ENCODE measurements at regions of chr19 and their contacts with region 1.

Region 1: GRCh38 chr19:35154525-35155406 is at the start of gene FXYD5:
- DNase-seq: peak; percentile 93
- ATAC-seq: peak; percentile 81
- H3K4me3 Mint-ChIP-seq: peak within 1 kb of the TSS; percentile 96
- H3K27ac Mint-ChIP-seq: peak within 1 kb of the TSS; percentile 99
- H3K4me1 Mint-ChIP-seq: peaks cover 52% of the 10 kb centered on the region
- H3K27me3 Mint-ChIP-seq: no peaks in the 10 kb centered on the region
- total RNA-seq, gene FXYD5: 261 to 358 TPM

Region 2: DNA sequence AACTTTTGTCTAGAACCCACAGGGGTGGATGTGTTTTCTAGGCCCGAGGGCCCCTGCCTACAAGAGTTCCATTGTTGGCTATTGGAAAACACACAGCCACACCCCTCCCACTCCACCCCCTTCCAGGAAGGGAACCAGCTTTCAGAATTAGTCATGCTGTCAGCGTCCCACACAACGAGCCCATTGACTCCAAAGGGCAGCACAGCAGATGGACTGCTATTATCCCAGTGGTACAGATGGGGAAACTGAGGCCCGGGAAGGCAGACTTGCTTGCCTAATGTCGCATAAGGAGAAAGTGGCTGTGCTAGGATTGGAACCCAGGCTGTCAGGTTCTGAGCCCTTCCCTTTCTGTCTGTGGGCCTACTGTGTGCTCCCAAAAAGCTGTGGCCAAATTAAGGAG is 47.2 kb before region 1 on chr19:
- CTCF ChIA-PET with region 1: no interaction called
- POLR2A ChIA-PET with region 1: no interaction called
- intact Hi-C with region 1: no loop called
- DNase-seq: peak; percentile 34
- ATAC-seq: peak; percentile 30
- H3K4me3 Mint-ChIP-seq: no peak overlapping the region
- H3K27ac Mint-ChIP-seq: no peak overlapping the region
- H3K4me1 Mint-ChIP-seq: peaks cover 6% of the 10 kb centered on the region
- H3K27me3 Mint-ChIP-seq: no peaks in the 10 kb centered on the region

Region 3: GRCh38 chr19:35135389-35135909 is 19.3 kb before region 1 on chr19:
- CTCF ChIA-PET with region 1: interaction called, 13 read pairs
- POLR2A ChIA-PET with region 1: no interaction called
- intact Hi-C with region 1: no loop called
- DNase-seq: peak; percentile 83
- ATAC-seq: peak; percentile 95
- H3K4me3 Mint-ChIP-seq: no peak overlapping the region
- H3K27ac Mint-ChIP-seq: no peak overlapping the region
- H3K4me1 Mint-ChIP-seq: peaks cover 4% of the 10 kb centered on the region
- H3K27me3 Mint-ChIP-seq: no peaks in the 10 kb centered on the region